Posterior cingulate gyrus (tissue), 11 donors: ENCODE measurements at regions of chr3 and their contacts with region 1.

Region 1: GRCh38 chr3:112390783-112391641 is 58.1 kb downstream of the CD200 start:
- DNase-seq: peak in 6 of 10 donors; percentile 6 to 55 (median 25)

Region 2: GRCh38 chr3:112333002-112333380 is 58.0 kb before region 1 on chr3 and contains the start of gene CD200:
- intact Hi-C with region 1: loop called (anchors 5 kb)
- DNase-seq: peak; percentile 57 to 97 (median 76)

Region 3: GRCh38 chr3:112350181-112350825 is 40.7 kb before region 1 on chr3:
- intact Hi-C with region 1: loop called (anchors 2 kb)
- DNase-seq: no peak

Region 4: GRCh38 chr3:112489674-112490479 is 98.9 kb after region 1 on chr3:
- intact Hi-C with region 1: no loop called
- DNase-seq: no peak

Region 5: GRCh38 chr3:113629584-113630421 is 1238.8 kb after region 1 on chr3:
- intact Hi-C with region 1: no loop called
- DNase-seq: no peak